ENCODE measurements at regions of chr19 and their contacts with region 1.

Region 1: GRCh38 chr19:17718947-17719711 is at the start of gene MAP1S:
- DNase-seq: peak; percentile 12 to 77 (median 62)
- ATAC-seq: peak; percentile 86
- H3K4me3 ChIP-seq: peak within 1 kb of the TSS; percentile 81
- H3K4me3 Mint-ChIP-seq: peak within 1 kb of the TSS; percentile 87
- H3K27ac ChIP-seq: peak within 1 kb of the TSS in 1 of 2 experiments; percentile 55
- H3K27ac Mint-ChIP-seq: peak within 1 kb of the TSS; percentile 91
- H3K4me1 ChIP-seq: peaks cover 32% of the 10 kb centered on the region
- H3K4me1 Mint-ChIP-seq: peaks cover 32% of the 10 kb centered on the region
- H3K27me3 ChIP-seq: no peaks in the 10 kb centered on the region
- H3K27me3 Mint-ChIP-seq: no peaks in the 10 kb centered on the region
- CTCF ChIP-seq: no peak
- total RNA-seq, gene MAP1S: 28.1 to 29.7 TPM

Region 2: GRCh38 chr19:17687857-17688784 is 31.0 kb before region 1 on chr19 and contains the start of gene UNC13A:
- CTCF ChIA-PET with region 1: no interaction called
- POLR2A ChIA-PET with region 1: no interaction called
- intact Hi-C with region 1: loop called in 1 of 2 experiments (anchors 2 kb)
- DNase-seq: peak; percentile 1 to 63 (median 52)
- ATAC-seq: peak; percentile 93
- H3K4me3 ChIP-seq: no peak within 1 kb of the TSS
- H3K4me3 Mint-ChIP-seq: no peak within 1 kb of the TSS
- H3K27ac ChIP-seq: no peak within 1 kb of the TSS
- H3K27ac Mint-ChIP-seq: no peak within 1 kb of the TSS
- H3K4me1 ChIP-seq: peaks cover 15% of the 10 kb centered on the region
- H3K4me1 Mint-ChIP-seq: peaks cover 13% of the 10 kb centered on the region
- H3K27me3 ChIP-seq: peaks cover 21 to 40% of the 10 kb centered on the region in 2 experiments
- H3K27me3 Mint-ChIP-seq: peaks cover 65% of the 10 kb centered on the region
- CTCF ChIP-seq: no peak
- total RNA-seq, gene UNC13A: 0.03 to 0.06 TPM

Region 3: DNA sequence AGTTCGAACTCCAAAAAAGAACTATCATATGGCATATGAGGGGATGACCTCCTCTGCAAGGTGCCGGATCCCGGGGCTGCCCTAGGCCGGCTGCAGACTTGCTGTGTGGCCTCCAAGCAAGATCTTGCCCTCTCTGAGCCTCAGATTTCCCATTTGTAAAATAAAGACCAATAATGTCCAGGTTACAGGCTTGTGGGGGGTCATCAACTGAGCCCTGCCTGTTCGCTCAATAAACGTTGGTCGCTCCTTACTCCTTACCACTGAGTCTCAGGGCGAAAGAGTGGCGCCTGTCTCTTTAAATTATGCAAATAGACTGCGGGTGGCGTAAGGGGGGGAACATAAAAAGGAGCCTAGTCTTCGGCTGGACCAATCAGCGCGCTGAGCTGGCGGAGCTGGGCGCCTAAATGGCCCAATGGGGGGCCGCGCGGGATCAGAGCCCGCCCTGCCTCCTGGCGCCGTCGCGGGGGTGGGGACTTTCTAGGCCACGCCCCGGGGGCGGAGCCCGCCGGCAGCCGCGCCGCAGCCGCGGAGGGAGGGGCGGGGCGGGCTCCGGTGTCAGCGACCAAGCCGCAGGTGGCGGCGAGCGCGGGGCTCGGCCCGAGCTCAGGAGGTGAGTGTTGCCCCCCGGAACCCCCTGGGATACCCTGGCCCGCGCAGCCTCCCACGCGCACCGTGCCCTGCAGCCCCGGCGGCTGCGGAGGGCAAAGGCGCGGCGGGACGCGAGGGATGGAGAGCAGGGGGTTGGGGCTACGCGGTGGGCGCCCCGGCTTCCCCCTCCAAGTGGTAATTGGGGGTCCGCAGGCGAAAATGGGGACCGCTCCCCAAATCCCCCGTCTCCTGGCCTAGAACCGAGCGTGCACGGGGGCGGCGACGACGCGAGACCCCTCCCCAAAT is 28.3 kb after region 1 on chr19:
- CTCF ChIA-PET with region 1: interaction called, 8 read pairs
- POLR2A ChIA-PET with region 1: interaction called, 14 read pairs
- intact Hi-C with region 1: loop called (anchors 1 kb)
- DNase-seq: peak; percentile 85 to 98 (median 93)
- ATAC-seq: peak; percentile 87
- H3K4me3 ChIP-seq: peak overlapping the region; percentile 57 to 63
- H3K4me3 Mint-ChIP-seq: peak overlapping the region; percentile 89
- H3K27ac ChIP-seq: peak overlapping the region in 1 of 2 experiments; percentile 46
- H3K27ac Mint-ChIP-seq: peak overlapping the region; percentile 45
- H3K4me1 ChIP-seq: peaks cover 50% of the 10 kb centered on the region
- H3K4me1 Mint-ChIP-seq: peaks cover 46% of the 10 kb centered on the region
- H3K27me3 ChIP-seq: no peaks in the 10 kb centered on the region
- H3K27me3 Mint-ChIP-seq: no peaks in the 10 kb centered on the region
- CTCF ChIP-seq: no peak

Region 4: GRCh38 chr19:19618219-19619051 is 1899.3 kb after region 1 on chr19 and contains the start of gene PBX4:
- CTCF ChIA-PET with region 1: no interaction called
- POLR2A ChIA-PET with region 1: no interaction called
- intact Hi-C with region 1: no loop called
- DNase-seq: peak; percentile 98 to 100 (median 99)
- ATAC-seq: peak; percentile 96
- H3K4me3 ChIP-seq: peak within 1 kb of the TSS; percentile 70 to 91
- H3K4me3 Mint-ChIP-seq: peak within 1 kb of the TSS; percentile 90
- H3K27ac ChIP-seq: peak within 1 kb of the TSS; percentile 74 to 75
- H3K27ac Mint-ChIP-seq: peak within 1 kb of the TSS; percentile 92
- H3K4me1 ChIP-seq: peaks cover 28% of the 10 kb centered on the region
- H3K4me1 Mint-ChIP-seq: peaks cover 42% of the 10 kb centered on the region
- H3K27me3 ChIP-seq: no peaks in the 10 kb centered on the region
- H3K27me3 Mint-ChIP-seq: no peaks in the 10 kb centered on the region
- CTCF ChIP-seq: no peak
- total RNA-seq, gene PBX4: 44.4 to 48.8 TPM